ENCODE measurements at regions of chr1 and their contacts with region 1.

Region 1: DNA sequence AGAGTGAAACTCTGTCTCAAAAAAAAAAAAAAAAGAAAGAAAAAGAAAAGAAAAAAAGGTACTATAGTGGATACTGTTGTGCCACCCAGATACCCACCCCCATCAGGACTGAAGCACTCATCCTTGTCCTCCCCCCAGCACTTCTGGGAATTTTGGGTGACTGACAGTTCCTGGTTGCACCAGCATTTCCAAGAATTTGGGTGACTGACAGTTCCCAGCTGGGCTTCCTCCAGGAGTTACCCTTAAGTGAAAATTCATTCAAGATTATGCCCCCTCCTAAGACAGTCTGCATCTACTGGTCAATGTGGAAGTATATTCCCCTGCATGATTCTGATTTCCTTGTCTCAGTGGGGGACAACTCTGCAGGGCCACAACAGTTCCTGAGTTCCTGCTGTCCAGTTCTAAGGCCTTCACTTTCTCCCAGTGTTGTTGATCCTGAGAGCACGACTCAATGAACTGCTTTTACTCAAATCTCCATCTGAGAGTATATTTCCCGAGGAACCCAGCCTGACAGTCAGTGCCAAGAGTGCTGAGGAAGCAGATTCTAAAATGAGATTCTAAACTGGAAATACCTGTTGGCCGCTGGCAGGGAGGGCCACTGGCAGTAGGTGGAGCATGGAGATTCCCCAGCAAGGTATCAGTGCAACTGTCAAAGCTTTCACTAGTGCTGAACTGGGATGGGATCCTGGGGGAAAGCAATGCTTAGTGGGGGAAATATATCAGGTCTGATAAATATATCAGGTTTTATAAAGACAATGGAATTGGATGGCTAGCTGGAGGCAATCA is 18.5 kb downstream of the RIIAD1 start:
- DNase-seq: peak; percentile 72
- H3K4me3 ChIP-seq: no peak overlapping the region
- H3K27ac ChIP-seq: no peak overlapping the region
- H3K4me1 ChIP-seq: peaks cover 5% of the 10 kb centered on the region
- H3K27me3 ChIP-seq: no peaks in the 10 kb centered on the region
- CTCF ChIP-seq: peak in 1 of 2 donors; percentile 41

Region 2: DNA sequence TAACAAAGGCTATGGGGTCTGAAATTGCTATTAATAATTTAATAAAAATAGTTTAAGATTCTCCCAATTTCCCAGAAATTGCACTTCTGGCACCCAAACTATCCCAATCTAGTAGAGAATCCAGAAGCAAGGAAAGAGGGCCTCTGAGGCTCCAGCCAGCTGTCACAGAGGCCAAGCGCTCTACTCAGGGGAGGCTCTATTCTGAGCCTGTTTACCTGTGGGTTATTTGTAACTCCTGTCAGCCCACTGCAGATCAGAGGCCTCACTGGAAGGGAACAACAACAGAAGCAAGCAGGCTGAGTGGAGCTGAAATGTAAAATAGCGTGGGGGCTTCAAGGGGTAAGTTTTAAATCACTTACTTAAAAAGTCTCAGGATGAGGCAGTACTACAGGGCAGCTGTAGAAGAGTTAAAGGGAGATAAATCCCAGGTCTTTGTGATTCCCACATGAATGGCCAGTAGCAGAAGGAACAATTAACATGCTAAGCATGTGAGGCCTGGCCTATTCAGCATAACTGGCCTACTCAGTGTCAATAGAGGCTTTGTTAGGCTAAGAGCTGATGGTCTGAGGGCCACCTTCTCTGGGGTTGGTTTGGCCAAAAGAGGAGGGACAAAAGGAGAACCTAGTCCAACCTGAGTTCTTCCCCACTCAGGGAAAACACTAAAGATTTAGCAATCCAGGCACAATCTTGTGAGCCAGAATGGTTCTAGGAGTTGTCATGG is 444.9 kb before region 1 on chr1:
- CTCF ChIA-PET with region 1: no interaction called
- dilution Hi-C with region 1: no loop called
- in situ Hi-C with region 1: no loop called
- intact Hi-C with region 1: loop called (anchors 2 kb)
- DNase-seq: no peak
- H3K4me3 ChIP-seq: no peak overlapping the region
- H3K27ac ChIP-seq: no peak overlapping the region
- H3K4me1 ChIP-seq: no peaks in the 10 kb centered on the region
- H3K27me3 ChIP-seq: no peaks in the 10 kb centered on the region
- CTCF ChIP-seq: no peak

Region 3: GRCh38 chr1:151443846-151444782 is 295.7 kb before region 1 on chr1:
- CTCF ChIA-PET with region 1: no interaction called
- dilution Hi-C with region 1: no loop called
- in situ Hi-C with region 1: loop called in 1 of 2 experiments (anchors 10 kb)
- intact Hi-C with region 1: loop called (anchors 1 kb)
- DNase-seq: peak; percentile 77
- H3K4me3 ChIP-seq: no peak overlapping the region
- H3K27ac ChIP-seq: no peak overlapping the region
- H3K4me1 ChIP-seq: peaks cover 10% of the 10 kb centered on the region
- H3K27me3 ChIP-seq: no peaks in the 10 kb centered on the region
- CTCF ChIP-seq: peak; percentile 77 to 85

Region 4: GRCh38 chr1:151455231-151455630 is 284.6 kb before region 1 on chr1:
- CTCF ChIA-PET with region 1: no interaction called
- dilution Hi-C with region 1: no loop called
- in situ Hi-C with region 1: no loop called
- intact Hi-C with region 1: no loop called
- DNase-seq: no peak
- H3K4me3 ChIP-seq: no peak overlapping the region
- H3K27ac ChIP-seq: no peak overlapping the region
- H3K4me1 ChIP-seq: peaks cover 6% of the 10 kb centered on the region
- H3K27me3 ChIP-seq: no peaks in the 10 kb centered on the region
- CTCF ChIP-seq: no peak

Region 5: DNA sequence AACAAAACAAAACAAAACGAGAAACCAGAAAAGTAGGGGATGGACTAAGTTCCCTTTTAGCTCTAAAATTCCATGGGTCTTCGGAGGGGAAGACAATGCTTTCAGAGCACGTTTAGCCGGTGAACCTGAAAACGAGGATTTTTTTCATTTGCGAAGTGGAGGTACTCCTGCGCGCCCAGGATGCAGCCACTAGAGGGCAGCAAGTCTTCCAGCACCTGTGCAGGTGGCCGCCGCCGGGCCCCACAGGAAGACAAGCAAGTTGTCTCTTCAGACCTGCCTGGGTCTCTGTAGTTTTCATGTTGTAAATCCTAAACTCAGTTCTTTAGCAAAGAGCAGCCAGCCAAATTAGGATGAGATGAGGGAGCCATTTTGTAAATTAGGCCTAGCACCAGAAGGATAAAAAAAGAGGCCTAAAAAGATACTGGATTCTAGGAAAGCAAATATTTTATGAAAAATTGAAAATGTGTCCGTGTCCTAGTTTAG is 145.6 kb before region 1 on chr1:
- CTCF ChIA-PET with region 1: no interaction called
- dilution Hi-C with region 1: no loop called
- in situ Hi-C with region 1: loop called in 1 of 2 experiments (anchors 10 kb)
- intact Hi-C with region 1: loop called (anchors 1 kb)
- DNase-seq: peak; percentile 61
- H3K4me3 ChIP-seq: no peak overlapping the region
- H3K27ac ChIP-seq: no peak overlapping the region
- H3K4me1 ChIP-seq: no peaks in the 10 kb centered on the region
- H3K27me3 ChIP-seq: no peaks in the 10 kb centered on the region
- CTCF ChIP-seq: peak; percentile 93 to 98

Region 6: GRCh38 chr1:151881456-151881855 is 141.7 kb after region 1 on chr1:
- CTCF ChIA-PET with region 1: no interaction called
- dilution Hi-C with region 1: no loop called
- in situ Hi-C with region 1: no loop called
- intact Hi-C with region 1: loop called (anchors 1 kb)
- DNase-seq: no peak
- H3K4me3 ChIP-seq: no peak overlapping the region
- H3K27ac ChIP-seq: no peak overlapping the region
- H3K4me1 ChIP-seq: peaks cover 12% of the 10 kb centered on the region
- H3K27me3 ChIP-seq: no peaks in the 10 kb centered on the region
- CTCF ChIP-seq: peak; percentile 18 to 55

Region 7: GRCh38 chr1:152096121-152096865 is 356.5 kb after region 1 on chr1:
- CTCF ChIA-PET with region 1: no interaction called
- dilution Hi-C with region 1: no loop called
- in situ Hi-C with region 1: no loop called
- intact Hi-C with region 1: no loop called
- DNase-seq: no peak
- H3K4me3 ChIP-seq: no peak overlapping the region
- H3K27ac ChIP-seq: no peak overlapping the region
- H3K4me1 ChIP-seq: no peaks in the 10 kb centered on the region
- H3K27me3 ChIP-seq: peaks cover 6% of the 10 kb centered on the region
- CTCF ChIP-seq: no peak